ENCODE measurements at regions of chr3 and their contacts with region 1.

Region 1: GRCh38 chr3:12476238-12476897 is 7.9 kb upstream of the TSEN2 start:
- DNase-seq: peak; percentile 92
- ATAC-seq: peak; percentile 64
- H3K4me3 ChIP-seq: no peak overlapping the region
- H3K27ac ChIP-seq: peak overlapping the region; percentile 94
- H3K4me1 ChIP-seq: peaks cover 48% of the 10 kb centered on the region
- H3K27me3 ChIP-seq: no peaks in the 10 kb centered on the region
- CTCF ChIP-seq: no peak

Region 2: DNA sequence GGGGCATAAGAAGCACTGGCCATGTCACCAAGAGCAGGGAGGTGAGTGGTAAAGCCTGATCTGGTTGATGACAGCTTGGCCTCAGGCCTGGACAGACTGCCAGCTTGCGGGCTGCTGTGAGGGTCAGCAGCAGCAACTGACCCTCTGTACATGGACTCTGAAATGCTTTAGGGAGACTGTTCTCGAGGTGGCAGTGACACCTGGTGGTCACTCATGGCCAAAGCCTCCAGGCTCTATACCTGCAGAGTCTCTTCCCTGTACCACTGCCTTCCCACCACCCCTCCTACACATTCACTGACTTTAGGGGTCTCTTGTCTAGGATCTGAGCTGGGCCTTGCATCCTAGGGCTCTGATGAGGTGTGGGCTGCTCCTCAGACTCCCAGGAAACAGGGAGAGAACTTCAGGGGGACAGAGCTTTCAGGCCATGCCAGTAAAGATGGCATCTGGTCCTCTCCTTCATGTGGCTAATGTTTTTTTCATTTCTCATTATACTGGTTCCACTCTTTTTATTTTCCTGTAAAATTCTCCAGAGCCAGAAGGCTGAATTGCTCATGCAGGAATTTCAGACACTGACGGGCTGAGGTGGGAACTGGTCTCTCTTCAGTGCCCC is 300.4 kb before region 1 on chr3:
- CTCF ChIA-PET with region 1: interaction called, 5 read pairs
- POLR2A ChIA-PET with region 1: interaction called, 21 read pairs
- intact Hi-C with region 1: loop called (anchors 5 kb)
- DNase-seq: peak; percentile 73
- ATAC-seq: peak; percentile 81
- H3K4me3 ChIP-seq: no peak overlapping the region
- H3K27ac ChIP-seq: peak overlapping the region; percentile 32; the same call in 1 of the 2 replicates
- H3K4me1 ChIP-seq: peaks cover 48% of the 10 kb centered on the region
- H3K27me3 ChIP-seq: no peaks in the 10 kb centered on the region
- CTCF ChIP-seq: peak; percentile 90

Region 3: GRCh38 chr3:12193485-12194165 is 282.7 kb before region 1 on chr3:
- CTCF ChIA-PET with region 1: interaction called, 4 read pairs
- POLR2A ChIA-PET with region 1: no interaction called
- intact Hi-C with region 1: loop called (anchors 1 kb)
- DNase-seq: peak; percentile 99
- ATAC-seq: peak; percentile 82
- H3K4me3 ChIP-seq: peak overlapping the region; percentile 47
- H3K27ac ChIP-seq: peak overlapping the region; percentile 97
- H3K4me1 ChIP-seq: peaks cover 57% of the 10 kb centered on the region
- H3K27me3 ChIP-seq: no peaks in the 10 kb centered on the region
- CTCF ChIP-seq: no peak

Region 4: GRCh38 chr3:12405432-12406272 is 70.7 kb before region 1 on chr3:
- CTCF ChIA-PET with region 1: interaction called, 5 read pairs
- POLR2A ChIA-PET with region 1: no interaction called
- intact Hi-C with region 1: loop called (anchors 1 kb)
- DNase-seq: peak; percentile 98
- ATAC-seq: peak; percentile 94
- H3K4me3 ChIP-seq: 0 out of 2 replicates have a peak overlapping the region, but pooled peaks have one; percentile 15
- H3K27ac ChIP-seq: peak overlapping the region; percentile 92
- H3K4me1 ChIP-seq: peaks cover 59% of the 10 kb centered on the region
- H3K27me3 ChIP-seq: no peaks in the 10 kb centered on the region
- CTCF ChIP-seq: no peak